ENCODE measurements at regions of chr15 and their contacts with region 1.

Region 1: DNA sequence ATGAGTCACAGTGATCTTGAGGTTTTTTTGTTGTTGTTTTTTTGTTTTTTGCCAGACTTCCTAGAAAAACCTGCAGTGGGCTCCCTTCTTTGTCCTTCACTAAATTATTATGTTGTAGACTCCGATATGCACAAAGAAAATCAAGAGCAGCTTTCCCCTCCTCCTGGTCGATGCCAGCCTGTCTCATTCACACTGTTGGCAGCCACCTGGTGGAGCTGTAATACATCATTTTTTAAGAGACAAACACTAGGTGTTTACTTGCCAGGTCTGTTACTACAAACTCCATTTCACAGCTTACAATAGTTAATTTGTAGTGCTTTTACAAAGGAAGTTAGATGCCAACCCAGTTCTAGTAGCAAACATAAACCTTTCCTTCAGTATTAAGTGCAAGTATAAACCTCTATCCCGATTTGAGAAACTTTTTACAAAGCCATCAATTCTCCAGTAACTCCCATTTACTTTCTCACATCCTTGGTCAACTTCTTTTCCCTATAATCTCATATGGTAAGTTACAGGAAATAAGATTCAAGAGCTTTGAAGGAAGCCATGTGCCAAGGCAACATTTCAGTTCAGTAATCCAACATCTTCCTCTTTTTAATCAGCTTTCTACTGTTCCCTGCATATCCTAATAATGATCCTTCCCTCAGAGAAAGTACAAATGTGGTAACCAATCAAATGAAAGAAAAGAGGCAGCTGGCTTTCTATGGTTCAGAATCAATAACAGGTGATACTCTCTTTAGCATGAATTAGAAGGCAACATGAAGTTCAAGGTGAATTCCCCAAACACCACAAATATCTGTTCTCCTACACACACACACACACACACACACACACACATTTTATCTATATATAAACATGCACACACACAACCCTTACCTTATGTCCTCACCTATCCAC is 14.0 kb downstream of the AAGAB start:
- DNase-seq: peak in 5 of 9 experiments; percentile 20 to 59 (median 26)
- ATAC-seq: peak; percentile 66
- H3K4me3 ChIP-seq: no peak overlapping the region
- H3K4me3 Mint-ChIP-seq: peak overlapping the region; percentile 30
- H3K27ac ChIP-seq: peak overlapping the region in 1 of 2 experiments; percentile 66
- H3K27ac Mint-ChIP-seq: peak overlapping the region; percentile 41
- H3K4me1 ChIP-seq: peaks cover 27% of the 10 kb centered on the region
- H3K4me1 Mint-ChIP-seq: peaks cover 53% of the 10 kb centered on the region
- H3K27me3 ChIP-seq: no peaks in the 10 kb centered on the region
- H3K27me3 Mint-ChIP-seq: no peaks in the 10 kb centered on the region
- CTCF ChIP-seq: no peak

Region 2: DNA sequence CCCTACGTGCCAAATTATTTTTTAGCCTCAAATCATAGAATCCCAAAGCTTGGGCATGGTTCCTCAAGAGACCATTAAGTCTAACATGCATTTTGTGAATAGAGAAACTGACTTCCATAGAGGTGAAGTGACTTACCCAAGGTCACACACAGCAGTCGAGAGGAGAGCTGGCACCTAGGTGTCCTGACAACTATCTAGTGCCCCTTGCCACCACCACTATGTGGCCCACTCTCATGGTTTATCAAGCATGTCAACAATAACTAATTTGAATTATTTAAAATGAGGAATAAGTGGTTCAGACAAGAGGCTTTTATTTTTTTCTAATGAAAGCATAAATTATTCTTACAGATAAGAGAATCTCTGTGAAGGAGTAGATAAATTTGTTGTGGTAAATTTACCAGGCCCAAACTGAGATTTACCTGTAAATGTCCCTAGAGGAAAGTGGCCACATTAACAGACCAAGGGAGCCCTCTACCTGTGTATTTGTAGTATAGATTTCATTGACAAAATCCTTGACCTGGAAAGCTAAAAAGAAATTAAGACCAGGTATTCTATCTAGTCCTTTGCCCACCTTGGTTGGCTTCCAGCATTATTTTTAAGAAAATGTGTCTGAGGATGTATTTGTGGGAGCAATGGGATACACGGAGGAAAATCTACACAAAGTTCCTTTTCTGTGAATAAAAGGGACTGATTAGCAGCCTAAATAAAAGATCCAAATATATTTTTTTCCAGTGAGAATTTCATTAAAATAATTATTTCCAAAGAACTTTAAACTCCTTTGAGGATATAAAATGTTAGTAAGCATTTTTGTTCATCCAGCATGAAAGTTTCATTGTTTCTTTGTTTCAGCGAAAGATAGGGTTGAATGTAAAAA is 63.2 kb after region 1 on chr15:
- CTCF ChIA-PET with region 1: interaction called, 8 read pairs
- POLR2A ChIA-PET with region 1: no interaction called
- intact Hi-C with region 1: loop called (anchors 1 to 5 kb)
- DNase-seq: peak in 4 of 9 experiments; percentile 16 to 69 (median 42)
- ATAC-seq: peak; percentile 51
- H3K4me3 ChIP-seq: no peak overlapping the region
- H3K4me3 Mint-ChIP-seq: no peak overlapping the region
- H3K27ac ChIP-seq: no peak overlapping the region
- H3K27ac Mint-ChIP-seq: no peak overlapping the region
- H3K4me1 ChIP-seq: no peaks in the 10 kb centered on the region
- H3K4me1 Mint-ChIP-seq: no peaks in the 10 kb centered on the region
- H3K27me3 ChIP-seq: no peaks in the 10 kb centered on the region
- H3K27me3 Mint-ChIP-seq: peaks cover 2% of the 10 kb centered on the region
- CTCF ChIP-seq: peak; percentile 71

Region 3: GRCh38 chr15:67383899-67384298 is 143.4 kb after region 1 on chr15:
- CTCF ChIA-PET with region 1: no interaction called
- POLR2A ChIA-PET with region 1: no interaction called
- intact Hi-C with region 1: no loop called
- DNase-seq: no peak
- ATAC-seq: no peak
- H3K4me3 ChIP-seq: no peak overlapping the region
- H3K4me3 Mint-ChIP-seq: no peak overlapping the region
- H3K27ac ChIP-seq: no peak overlapping the region
- H3K27ac Mint-ChIP-seq: no peak overlapping the region
- H3K4me1 ChIP-seq: no peaks in the 10 kb centered on the region
- H3K4me1 Mint-ChIP-seq: no peaks in the 10 kb centered on the region
- H3K27me3 ChIP-seq: no peaks in the 10 kb centered on the region
- H3K27me3 Mint-ChIP-seq: peaks cover 5% of the 10 kb centered on the region
- CTCF ChIP-seq: no peak

Region 4: GRCh38 chr15:67433495-67434099 is 193.1 kb after region 1 on chr15:
- CTCF ChIA-PET with region 1: no interaction called
- POLR2A ChIA-PET with region 1: no interaction called
- intact Hi-C with region 1: loop called in 1 of 2 experiments (anchors 1 kb)
- DNase-seq: peak in 3 of 9 experiments; percentile 9 to 33 (median 20)
- ATAC-seq: no peak
- H3K4me3 ChIP-seq: no peak overlapping the region
- H3K4me3 Mint-ChIP-seq: no peak overlapping the region
- H3K27ac ChIP-seq: no peak overlapping the region
- H3K27ac Mint-ChIP-seq: no peak overlapping the region
- H3K4me1 ChIP-seq: no peaks in the 10 kb centered on the region
- H3K4me1 Mint-ChIP-seq: no peaks in the 10 kb centered on the region
- H3K27me3 ChIP-seq: no peaks in the 10 kb centered on the region
- H3K27me3 Mint-ChIP-seq: no peaks in the 10 kb centered on the region
- CTCF ChIP-seq: peak; percentile 49

Region 5: DNA sequence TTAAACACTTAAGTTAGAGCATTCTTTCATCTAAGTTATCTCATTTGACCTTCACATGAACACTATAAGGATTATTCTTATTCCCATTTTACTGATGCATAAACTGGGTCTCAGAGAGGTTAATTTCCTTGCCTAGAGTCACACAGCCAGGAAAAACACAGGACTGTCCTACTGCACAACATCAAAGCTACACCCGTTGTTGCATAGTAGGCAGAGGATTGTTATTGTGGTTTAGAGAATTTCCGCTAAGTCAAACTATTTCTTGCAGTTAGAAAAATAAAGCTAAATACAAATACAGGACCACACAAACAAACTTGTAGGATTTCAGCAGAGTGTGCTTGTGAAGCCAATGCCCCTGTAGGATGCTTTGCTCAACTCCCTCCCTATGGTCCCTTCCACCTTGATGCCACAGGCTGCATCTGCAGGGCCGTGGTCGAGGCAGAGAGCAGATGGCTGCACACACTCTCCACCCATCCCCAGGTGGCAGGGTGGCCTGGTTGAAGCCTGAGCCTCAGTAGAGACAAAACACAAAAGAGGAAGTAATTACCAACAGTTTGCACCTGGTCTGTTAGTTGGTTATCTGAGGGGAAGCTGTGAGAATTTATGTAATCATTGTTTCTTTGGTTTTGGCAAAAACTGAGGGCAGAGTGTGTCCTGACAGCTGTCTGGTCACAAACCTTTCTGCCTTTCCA is 543.8 kb after region 1 on chr15:
- CTCF ChIA-PET with region 1: no interaction called
- POLR2A ChIA-PET with region 1: no interaction called
- intact Hi-C with region 1: no loop called
- DNase-seq: peak in 3 of 9 experiments; percentile 32 to 61 (median 49)
- ATAC-seq: peak; percentile 27
- H3K4me3 ChIP-seq: no peak overlapping the region
- H3K4me3 Mint-ChIP-seq: peak overlapping the region; percentile 27
- H3K27ac ChIP-seq: peak overlapping the region in 1 of 2 experiments; percentile 12
- H3K27ac Mint-ChIP-seq: peak overlapping the region; percentile 85
- H3K4me1 ChIP-seq: peaks cover 27% of the 10 kb centered on the region
- H3K4me1 Mint-ChIP-seq: peaks cover 37% of the 10 kb centered on the region
- H3K27me3 ChIP-seq: no peaks in the 10 kb centered on the region
- H3K27me3 Mint-ChIP-seq: no peaks in the 10 kb centered on the region
- CTCF ChIP-seq: no peak